PC-3 (cell line): ENCODE measurements at regions of chr15 and their contacts with region 1.

Region 1: GRCh38 chr15:85330901-85331588 is 49.4 kb upstream of the AKAP13 start:
- DNase-seq: peak; percentile 94
- ATAC-seq: peak; percentile 90
- H3K4me3 ChIP-seq: peak overlapping the region; percentile 20; the same call in 1 of the 2 replicates
- H3K27ac ChIP-seq: peak overlapping the region; percentile 87
- H3K4me1 ChIP-seq: peaks cover 22% of the 10 kb centered on the region
- H3K27me3 ChIP-seq: no peaks in the 10 kb centered on the region
- CTCF ChIP-seq: peak; percentile 88

Region 2: GRCh38 chr15:85282504-85283115 is 48.4 kb before region 1 on chr15:
- CTCF ChIA-PET with region 1: no interaction called
- POLR2A ChIA-PET with region 1: no interaction called
- intact Hi-C with region 1: no loop called
- DNase-seq: peak; percentile 75
- ATAC-seq: peak; percentile 67
- H3K4me3 ChIP-seq: no peak overlapping the region
- H3K27ac ChIP-seq: no peak overlapping the region
- H3K4me1 ChIP-seq: no peaks in the 10 kb centered on the region; the same call in 1 of the 2 replicates
- H3K27me3 ChIP-seq: no peaks in the 10 kb centered on the region
- CTCF ChIP-seq: no peak

Region 3: GRCh38 chr15:85312486-85312885 is 18.6 kb before region 1 on chr15:
- CTCF ChIA-PET with region 1: no interaction called
- POLR2A ChIA-PET with region 1: no interaction called
- intact Hi-C with region 1: no loop called
- DNase-seq: no peak
- ATAC-seq: no peak
- H3K4me3 ChIP-seq: no peak overlapping the region
- H3K27ac ChIP-seq: no peak overlapping the region
- H3K4me1 ChIP-seq: peaks cover 8% of the 10 kb centered on the region
- H3K27me3 ChIP-seq: no peaks in the 10 kb centered on the region
- CTCF ChIP-seq: no peak

Region 4: DNA sequence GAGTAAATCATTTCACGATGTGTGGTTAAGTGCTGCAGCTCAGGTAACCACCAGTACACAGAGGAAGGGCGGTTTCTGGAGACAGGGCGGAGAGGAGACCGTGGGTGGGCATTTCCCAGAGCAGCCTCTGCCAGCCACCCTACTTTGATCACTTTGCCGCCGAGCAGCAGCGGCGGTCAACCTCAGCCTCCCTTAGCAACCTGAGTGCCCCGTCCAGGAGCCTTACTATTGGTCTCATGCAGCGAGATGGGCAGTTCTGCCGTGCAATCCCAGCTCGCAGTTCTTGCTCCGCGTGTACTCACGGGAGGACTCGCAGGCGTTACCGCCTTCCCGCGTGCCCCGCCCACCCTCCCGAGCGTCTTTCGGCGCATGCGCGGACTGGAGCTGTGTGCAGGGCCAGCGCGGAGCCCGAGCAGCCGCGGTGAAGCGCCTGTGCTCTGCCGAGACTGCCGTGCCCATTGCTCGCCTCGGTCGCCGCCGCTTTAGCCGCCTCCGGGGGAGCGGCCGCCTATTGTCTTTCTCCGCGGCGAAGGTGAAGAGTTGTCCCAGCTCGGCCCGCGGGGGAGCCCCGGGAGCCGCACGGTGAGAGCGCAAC is 49.3 kb after region 1 on chr15 and contains the start of gene AKAP13:
- CTCF ChIA-PET with region 1: no interaction called
- POLR2A ChIA-PET with region 1: interaction called, 4 read pairs
- intact Hi-C with region 1: loop called (anchors 1 kb)
- DNase-seq: peak; percentile 99
- ATAC-seq: peak; percentile 88
- H3K4me3 ChIP-seq: peak within 1 kb of the TSS; percentile 78
- H3K27ac ChIP-seq: peak within 1 kb of the TSS; percentile 69
- H3K4me1 ChIP-seq: peaks cover 24% of the 10 kb centered on the region
- H3K27me3 ChIP-seq: no peaks in the 10 kb centered on the region
- CTCF ChIP-seq: no peak
- total RNA-seq, gene AKAP13: 36.8 and 46.8 TPM in 2 replicates

Region 5: DNA sequence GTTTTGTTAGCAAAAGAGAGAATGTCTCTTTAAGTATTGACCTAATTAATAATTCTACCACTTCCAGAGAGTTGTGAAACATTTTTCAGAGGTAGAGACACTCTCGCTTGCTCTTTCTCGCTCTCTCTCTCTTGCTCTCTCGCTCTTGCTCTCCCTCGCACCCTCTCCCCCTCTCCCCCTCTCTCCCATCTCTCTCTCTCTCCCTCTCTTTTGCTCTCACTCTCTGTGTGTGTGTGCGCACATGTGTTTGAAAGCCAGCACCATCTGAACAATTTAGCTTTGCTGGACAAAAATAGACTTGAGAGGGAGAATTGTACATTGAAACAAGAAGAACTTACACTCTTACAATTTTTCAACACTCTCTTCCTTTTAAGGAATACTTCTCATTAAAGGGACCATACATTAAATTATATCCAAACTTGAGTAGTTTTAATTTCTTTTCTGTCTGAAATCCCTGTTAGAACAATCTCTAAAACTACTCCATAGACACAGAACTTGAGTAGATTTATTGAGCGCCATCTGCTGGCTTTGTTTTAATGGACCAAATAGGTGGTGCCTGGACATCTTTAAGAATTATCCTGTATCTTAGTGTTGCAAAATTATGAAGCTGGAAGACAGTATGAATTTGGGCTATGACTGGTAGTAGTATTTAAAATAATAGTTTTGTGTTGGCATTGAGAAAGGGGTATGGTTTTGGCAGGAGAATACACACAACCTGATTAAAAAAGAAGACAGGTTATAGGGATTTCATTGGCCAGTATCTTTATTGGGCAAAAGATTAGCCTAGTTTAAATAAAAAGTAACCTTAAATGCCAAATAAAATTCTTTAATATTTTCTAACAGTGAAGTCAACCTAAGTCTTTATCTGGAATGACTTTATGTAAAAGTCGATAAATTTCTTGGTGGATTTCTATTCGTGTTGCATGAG is 174.0 kb after region 1 on chr15:
- CTCF ChIA-PET with region 1: no interaction called
- POLR2A ChIA-PET with region 1: no interaction called
- intact Hi-C with region 1: loop called (anchors 1 kb)
- DNase-seq: peak; percentile 73
- ATAC-seq: peak; percentile 76
- H3K4me3 ChIP-seq: no peak overlapping the region
- H3K27ac ChIP-seq: no peak overlapping the region; the same call in 1 of the 2 replicates
- H3K4me1 ChIP-seq: peaks cover 9% of the 10 kb centered on the region; the same call in 1 of the 2 replicates
- H3K27me3 ChIP-seq: no peaks in the 10 kb centered on the region
- CTCF ChIP-seq: peak; percentile 82